ENCODE measurements at regions of chr17 and their contacts with region 1.

Region 1: DNA sequence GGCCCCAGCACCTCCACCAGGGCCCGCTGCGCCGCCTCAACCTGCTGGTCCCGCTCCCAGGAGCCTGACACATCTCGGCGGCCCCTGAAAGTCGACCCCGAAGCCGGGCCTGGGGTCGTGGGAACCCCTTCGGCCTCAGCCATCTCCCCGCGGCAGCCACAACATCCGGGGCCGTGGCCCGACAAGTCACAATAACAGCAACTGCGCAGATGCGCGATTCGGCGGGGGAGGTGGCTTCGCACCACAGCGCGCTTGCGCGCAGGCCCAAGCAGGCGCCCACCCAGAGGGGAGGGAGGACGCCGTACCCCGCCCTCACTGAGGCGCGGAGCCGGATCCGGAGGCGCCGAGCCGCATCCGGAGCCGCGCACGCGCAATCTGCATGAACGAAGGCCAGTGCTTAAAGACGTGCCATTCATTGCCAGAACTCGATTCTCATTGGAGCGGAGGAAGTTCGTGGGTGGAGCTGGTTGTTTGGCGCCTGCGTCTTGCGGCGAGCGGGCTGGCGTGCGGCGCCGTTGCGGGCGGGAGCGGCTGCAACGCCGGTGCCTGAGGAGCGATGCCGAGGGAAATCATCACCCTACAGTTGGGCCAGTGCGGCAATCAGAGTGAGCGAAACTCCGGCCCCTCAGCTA is at the starts of genes RETREG3 and TUBG1:
- DNase-seq: peak; percentile 100
- H3K4me3 Mint-ChIP-seq: peak within 1 kb of the TSS; percentile 99
- H3K27ac Mint-ChIP-seq: peak within 1 kb of the TSS; percentile 94
- H3K4me1 Mint-ChIP-seq: peaks cover 30% of the 10 kb centered on the region
- H3K27me3 Mint-ChIP-seq: no peaks in the 10 kb centered on the region
- total RNA-seq, gene RETREG3: 35.8 and 38.3 TPM in 2 replicates
- total RNA-seq, gene TUBG1: 99.9 and 100 TPM in 2 replicates

Region 2: GRCh38 chr17:42407289-42407836 is 201.9 kb before region 1 on chr17:
- intact Hi-C with region 1: no loop called
- DNase-seq: peak; percentile 88
- H3K4me3 Mint-ChIP-seq: no peak overlapping the region
- H3K27ac Mint-ChIP-seq: no peak overlapping the region
- H3K4me1 Mint-ChIP-seq: peaks cover 16% of the 10 kb centered on the region
- H3K27me3 Mint-ChIP-seq: peaks cover 4% of the 10 kb centered on the region

Region 3: GRCh38 chr17:42566883-42567573 is 42.3 kb before region 1 on chr17 and contains the start of gene MLX:
- intact Hi-C with region 1: loop called (anchors 2 kb)
- DNase-seq: peak; percentile 98
- H3K4me3 Mint-ChIP-seq: peak within 1 kb of the TSS; percentile 98
- H3K27ac Mint-ChIP-seq: peak within 1 kb of the TSS; percentile 96
- H3K4me1 Mint-ChIP-seq: peaks cover 34% of the 10 kb centered on the region
- H3K27me3 Mint-ChIP-seq: no peaks in the 10 kb centered on the region
- total RNA-seq, gene MLX: 67.8 and 72.6 TPM in 2 replicates